MCF 10A (cell line): ENCODE measurements at regions of chr1 and their contacts with region 1.

Region 1: GRCh38 chr1:8423650-8424538 is 106.0 kb downstream of the SLC45A1 start:
- DNase-seq: peak; percentile 45
- H3K4me3 Mint-ChIP-seq: no peak overlapping the region
- H3K27ac Mint-ChIP-seq: peak overlapping the region; percentile 52
- H3K4me1 Mint-ChIP-seq: peaks cover 6% of the 10 kb centered on the region
- H3K27me3 Mint-ChIP-seq: no peaks in the 10 kb centered on the region
- CTCF ChIP-seq: no peak

Region 2: DNA sequence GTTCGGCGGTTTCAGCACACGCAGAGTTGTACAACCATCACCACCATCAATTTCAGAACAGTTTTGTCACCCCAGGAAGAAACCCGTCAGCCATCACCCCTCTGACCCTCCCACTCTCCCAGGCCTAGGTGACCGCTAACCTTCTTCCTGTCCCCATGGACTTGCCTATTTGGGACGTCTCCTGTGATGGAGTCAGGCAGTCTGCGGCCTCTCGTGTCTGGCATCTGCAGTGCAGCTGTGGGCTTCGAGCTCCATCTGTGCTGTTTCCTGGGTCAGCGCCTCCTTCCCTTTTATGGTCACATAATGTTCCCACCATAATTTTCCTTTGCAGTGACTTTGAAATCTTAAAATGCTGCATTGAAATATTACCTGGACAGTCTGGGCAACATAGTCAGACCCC is 81.6 kb before region 1 on chr1:
- CTCF ChIA-PET with region 1: no interaction called
- POLR2A ChIA-PET with region 1: no interaction called
- intact Hi-C with region 1: no loop called
- DNase-seq: no peak
- H3K4me3 Mint-ChIP-seq: no peak overlapping the region
- H3K27ac Mint-ChIP-seq: no peak overlapping the region
- H3K4me1 Mint-ChIP-seq: peaks cover 21% of the 10 kb centered on the region
- H3K27me3 Mint-ChIP-seq: peaks cover 14% of the 10 kb centered on the region
- CTCF ChIP-seq: no peak

Region 3: GRCh38 chr1:8409106-8409505 is 14.8 kb before region 1 on chr1:
- CTCF ChIA-PET with region 1: interaction called, 17 read pairs
- POLR2A ChIA-PET with region 1: interaction called, 6 read pairs
- intact Hi-C with region 1: no loop called
- DNase-seq: peak; percentile 14
- H3K4me3 Mint-ChIP-seq: no peak overlapping the region
- H3K27ac Mint-ChIP-seq: no peak overlapping the region
- H3K4me1 Mint-ChIP-seq: peaks cover 25% of the 10 kb centered on the region
- H3K27me3 Mint-ChIP-seq: no peaks in the 10 kb centered on the region
- CTCF ChIP-seq: peak; percentile 24